ENCODE measurements at regions of chr3 and their contacts with region 1.

Region 1: DNA sequence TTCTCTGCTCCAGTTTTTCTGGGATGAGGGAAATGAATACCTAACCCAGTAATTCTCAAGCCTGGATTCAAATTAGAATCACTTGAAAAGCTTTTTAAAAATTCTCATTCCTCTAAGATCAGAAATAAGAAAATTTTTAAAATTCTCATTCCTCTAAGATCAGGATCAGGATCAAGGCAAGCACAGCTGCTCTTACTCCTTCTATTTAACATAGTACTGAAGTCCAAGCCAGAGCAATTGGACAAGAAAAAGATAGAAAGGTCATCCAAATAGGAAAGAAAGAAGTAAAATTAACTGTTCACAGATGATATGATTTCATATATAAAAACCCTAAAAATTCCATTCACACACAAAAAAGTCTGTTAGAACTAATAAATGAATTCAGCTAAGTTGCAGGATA is 24.2 kb upstream of the CLRN1 start:
- DNase-seq: no peak
- H3K4me3 ChIP-seq: no peak overlapping the region
- H3K27ac ChIP-seq: no peak overlapping the region
- H3K4me1 ChIP-seq: no peaks in the 10 kb centered on the region
- H3K27me3 ChIP-seq: no peaks in the 10 kb centered on the region

Region 2: DNA sequence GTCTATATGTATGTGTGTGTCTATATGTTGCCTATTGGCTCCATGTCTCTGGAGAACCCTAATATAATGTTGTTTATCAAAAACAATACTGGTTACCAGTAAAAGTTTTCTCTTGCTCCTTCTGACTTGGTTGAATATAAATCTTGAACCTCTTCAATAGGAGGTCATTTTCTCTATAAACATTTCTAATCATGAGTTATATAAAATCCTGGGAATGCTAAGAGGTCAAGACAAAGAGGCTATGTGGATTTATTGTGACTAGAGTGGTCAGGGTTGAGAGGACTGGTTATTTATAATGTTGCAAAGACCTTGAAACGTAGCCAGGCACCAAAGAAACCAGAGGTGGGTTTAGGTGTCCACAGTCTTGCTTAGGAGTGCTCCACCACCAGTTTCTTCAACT is 90.3 kb before region 1 on chr3:
- CTCF ChIA-PET with region 1: no interaction called
- POLR2A ChIA-PET with region 1: no interaction called
- DNase-seq: no peak
- H3K4me3 ChIP-seq: no peak overlapping the region
- H3K27ac ChIP-seq: no peak overlapping the region
- H3K4me1 ChIP-seq: no peaks in the 10 kb centered on the region
- H3K27me3 ChIP-seq: no peaks in the 10 kb centered on the region

Region 3: GRCh38 chr3:151008699-151009098 is 12.0 kb after region 1 on chr3:
- CTCF ChIA-PET with region 1: interaction called, 12 read pairs
- POLR2A ChIA-PET with region 1: no interaction called
- DNase-seq: peak; percentile 61 to 71 (median 62)
- H3K4me3 ChIP-seq: no peak overlapping the region
- H3K27ac ChIP-seq: no peak overlapping the region
- H3K4me1 ChIP-seq: peaks cover 0 to 2% (median 0%) of the 10 kb centered on the region in 4 experiments
- H3K27me3 ChIP-seq: no peaks in the 10 kb centered on the region